Mammary epithelial cell (primary cell): ENCODE measurements at regions of chr11 and their contacts with region 1.

Region 1: GRCh38 chr11:27735281-27735680 is 35.0 kb upstream of the BDNF start:
- DNase-seq: no peak
- H3K4me3 ChIP-seq: no peak overlapping the region
- H3K27ac ChIP-seq: no peak overlapping the region
- H3K4me1 ChIP-seq: no peaks in the 10 kb centered on the region
- H3K27me3 ChIP-seq: peaks cover 5% of the 10 kb centered on the region
- CTCF ChIP-seq: no peak

Region 2: GRCh38 chr11:27331981-27332380 is 403.3 kb before region 1 on chr11:
- CTCF ChIA-PET with region 1: no interaction called
- dilution Hi-C with region 1: no loop called
- in situ Hi-C with region 1: no loop called
- intact Hi-C with region 1: no loop called
- DNase-seq: no peak
- H3K4me3 ChIP-seq: no peak overlapping the region
- H3K27ac ChIP-seq: no peak overlapping the region
- H3K4me1 ChIP-seq: peaks cover 10% of the 10 kb centered on the region
- H3K27me3 ChIP-seq: no peaks in the 10 kb centered on the region
- CTCF ChIP-seq: no peak

Region 3: GRCh38 chr11:27807594-27807993 is 72.3 kb after region 1 on chr11:
- CTCF ChIA-PET with region 1: no interaction called
- dilution Hi-C with region 1: no loop called
- in situ Hi-C with region 1: no loop called
- intact Hi-C with region 1: no loop called
- DNase-seq: no peak
- H3K4me3 ChIP-seq: no peak overlapping the region
- H3K27ac ChIP-seq: no peak overlapping the region
- H3K4me1 ChIP-seq: no peaks in the 10 kb centered on the region
- H3K27me3 ChIP-seq: no peaks in the 10 kb centered on the region
- CTCF ChIP-seq: no peak

Region 4: DNA sequence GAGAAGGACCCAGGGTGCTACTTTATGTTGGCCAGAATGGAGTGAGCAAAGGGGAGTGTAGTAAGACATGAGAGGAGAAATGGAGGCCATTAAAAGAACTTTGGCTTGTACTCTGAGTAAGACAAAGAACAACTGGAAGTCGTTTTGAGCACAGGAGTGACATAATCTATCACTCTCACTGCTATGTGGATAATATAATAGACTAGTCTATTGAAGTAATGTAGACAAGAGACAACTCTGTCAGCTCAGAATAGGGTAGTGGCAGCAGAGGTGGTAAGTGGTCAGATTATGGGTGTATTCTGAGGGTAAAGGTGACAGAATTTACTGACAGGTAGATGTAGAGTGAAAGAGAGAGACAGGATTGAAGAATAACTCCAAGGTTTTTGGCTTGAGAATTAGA is 364.4 kb after region 1 on chr11:
- CTCF ChIA-PET with region 1: interaction called, 10 read pairs
- dilution Hi-C with region 1: no loop called
- in situ Hi-C with region 1: no loop called
- intact Hi-C with region 1: no loop called
- DNase-seq: no peak
- H3K4me3 ChIP-seq: no peak overlapping the region
- H3K27ac ChIP-seq: no peak overlapping the region
- H3K4me1 ChIP-seq: no peaks in the 10 kb centered on the region
- H3K27me3 ChIP-seq: no peaks in the 10 kb centered on the region
- CTCF ChIP-seq: no peak